Calu3 (cell line): ENCODE measurements at regions of chr13 and their contacts with region 1.

Region 1: GRCh38 chr13:34863360-34864135 is 78.5 kb upstream of the NBEA start:
- DNase-seq: peak; percentile 58
- H3K4me3 Mint-ChIP-seq: no peak overlapping the region
- H3K27ac Mint-ChIP-seq: peak overlapping the region; percentile 90
- H3K4me1 Mint-ChIP-seq: peaks cover 35% of the 10 kb centered on the region
- H3K27me3 Mint-ChIP-seq: no peaks in the 10 kb centered on the region
- CTCF ChIP-seq: no peak

Region 2: DNA sequence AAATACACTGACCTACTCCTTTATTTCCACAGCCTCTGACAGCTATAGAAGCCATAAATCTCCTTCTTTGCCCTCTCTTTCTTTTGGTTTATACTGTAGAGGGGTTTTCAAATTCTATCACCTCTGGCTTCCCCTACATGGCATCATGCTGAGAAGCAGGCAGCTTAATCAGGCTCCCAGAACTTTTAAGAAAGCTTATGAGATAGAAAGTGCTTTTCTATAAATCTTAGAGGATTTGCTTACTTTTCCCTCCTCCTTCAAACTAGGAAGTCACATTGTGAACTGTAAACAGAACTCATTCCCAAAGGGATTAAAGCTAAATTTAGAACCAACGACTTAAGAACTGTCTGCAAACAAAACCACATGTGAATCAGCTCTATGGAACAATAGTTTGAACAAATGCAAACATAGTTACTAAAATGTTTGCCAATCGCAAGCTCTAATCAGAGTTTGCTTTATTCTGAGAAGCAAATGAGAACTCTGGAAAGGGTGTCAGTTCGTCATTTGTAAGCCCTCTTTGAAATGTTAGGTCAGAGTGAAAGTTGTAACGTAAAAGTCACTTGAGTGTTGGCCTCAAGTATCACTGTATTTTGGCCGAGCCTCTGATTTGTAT is 701.5 kb before region 1 on chr13:
- CTCF ChIA-PET with region 1: no interaction called
- intact Hi-C with region 1: loop called (anchors 10 kb)
- DNase-seq: no peak
- H3K4me3 Mint-ChIP-seq: peak overlapping the region; percentile 32
- H3K27ac Mint-ChIP-seq: peak overlapping the region; percentile 94
- H3K4me1 Mint-ChIP-seq: peaks cover 62% of the 10 kb centered on the region
- H3K27me3 Mint-ChIP-seq: no peaks in the 10 kb centered on the region
- CTCF ChIP-seq: no peak

Region 3: DNA sequence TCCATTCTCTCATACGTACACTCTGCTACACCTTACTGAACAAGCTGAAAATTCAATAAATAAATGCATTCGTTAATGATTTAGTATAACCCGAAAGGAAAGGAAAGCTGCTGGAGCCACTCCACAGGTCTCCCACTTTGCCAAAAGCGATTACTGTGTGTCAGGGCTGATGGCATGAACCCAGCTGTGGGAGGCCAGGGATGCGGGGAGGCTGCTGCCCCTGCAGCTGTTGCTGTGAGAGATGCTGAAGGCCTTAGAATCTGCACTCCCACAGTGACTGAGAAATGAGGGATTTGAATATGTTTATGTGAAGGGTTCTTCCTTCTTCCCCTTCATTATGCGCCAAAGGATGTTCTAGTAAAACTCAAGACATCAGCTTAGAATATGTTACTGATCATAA is 19.8 kb after region 1 on chr13:
- CTCF ChIA-PET with region 1: no interaction called
- intact Hi-C with region 1: no loop called
- DNase-seq: no peak
- H3K4me3 Mint-ChIP-seq: no peak overlapping the region
- H3K27ac Mint-ChIP-seq: no peak overlapping the region
- H3K4me1 Mint-ChIP-seq: peaks cover 8% of the 10 kb centered on the region
- H3K27me3 Mint-ChIP-seq: no peaks in the 10 kb centered on the region
- CTCF ChIP-seq: no peak

Region 4: DNA sequence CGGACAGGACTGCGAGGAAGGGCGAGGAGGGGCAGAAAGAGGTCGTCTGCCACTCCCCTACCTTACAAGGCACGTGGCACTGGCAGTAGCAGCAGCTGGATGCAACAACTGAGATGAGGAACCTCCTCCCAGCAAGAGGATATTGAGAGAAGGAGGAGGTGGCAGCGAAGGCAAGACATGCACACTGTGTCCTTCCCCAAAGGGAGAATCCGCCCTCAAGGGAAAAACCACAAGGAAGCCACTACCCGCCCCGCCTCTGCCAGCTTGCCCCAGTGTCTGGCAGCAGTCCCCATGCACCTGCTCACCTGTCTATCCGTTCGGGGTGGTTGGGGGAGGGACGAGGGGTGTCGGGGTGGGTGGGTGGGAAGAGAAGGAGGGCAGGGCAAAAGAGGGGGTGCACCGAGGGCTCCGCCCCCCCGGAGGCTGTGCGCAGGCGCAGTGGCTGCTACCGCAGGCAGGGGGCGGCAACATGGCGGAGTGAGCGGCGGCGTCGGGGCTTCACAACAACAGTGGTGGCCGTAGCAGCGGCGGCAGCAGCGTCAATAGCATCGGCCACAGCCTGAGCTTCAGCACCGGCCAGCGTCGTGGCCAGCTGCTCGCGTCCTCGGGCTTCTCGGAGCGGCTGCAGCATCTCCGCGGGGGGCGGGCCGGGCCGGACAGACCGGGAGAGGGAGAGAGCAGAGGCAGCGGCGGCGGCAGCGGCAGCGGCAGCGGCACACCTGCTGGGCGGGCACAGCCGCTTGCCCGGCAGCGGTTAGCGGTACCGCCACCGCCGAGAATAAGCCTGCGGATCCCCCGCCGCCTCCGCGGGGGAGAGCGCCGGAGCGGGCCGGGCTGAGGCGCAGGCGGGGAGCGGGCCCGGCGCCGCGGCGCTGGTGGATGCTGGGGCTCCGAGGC is 78.5 kb after region 1 on chr13 and contains the start of gene NBEA:
- CTCF ChIA-PET with region 1: interaction called, 3 read pairs
- intact Hi-C with region 1: loop called (anchors 5 kb)
- DNase-seq: peak; percentile 91
- H3K4me3 Mint-ChIP-seq: peak within 1 kb of the TSS; percentile 68
- H3K27ac Mint-ChIP-seq: peak within 1 kb of the TSS; percentile 84
- H3K4me1 Mint-ChIP-seq: no peaks in the 10 kb centered on the region
- H3K27me3 Mint-ChIP-seq: no peaks in the 10 kb centered on the region
- CTCF ChIP-seq: no peak
- total RNA-seq, gene NBEA: 18.0 and 21.4 TPM in 2 replicates